Aorta (tissue), 5 donors: ENCODE measurements at regions of chr14 and their contacts with region 1.

Region 1: DNA sequence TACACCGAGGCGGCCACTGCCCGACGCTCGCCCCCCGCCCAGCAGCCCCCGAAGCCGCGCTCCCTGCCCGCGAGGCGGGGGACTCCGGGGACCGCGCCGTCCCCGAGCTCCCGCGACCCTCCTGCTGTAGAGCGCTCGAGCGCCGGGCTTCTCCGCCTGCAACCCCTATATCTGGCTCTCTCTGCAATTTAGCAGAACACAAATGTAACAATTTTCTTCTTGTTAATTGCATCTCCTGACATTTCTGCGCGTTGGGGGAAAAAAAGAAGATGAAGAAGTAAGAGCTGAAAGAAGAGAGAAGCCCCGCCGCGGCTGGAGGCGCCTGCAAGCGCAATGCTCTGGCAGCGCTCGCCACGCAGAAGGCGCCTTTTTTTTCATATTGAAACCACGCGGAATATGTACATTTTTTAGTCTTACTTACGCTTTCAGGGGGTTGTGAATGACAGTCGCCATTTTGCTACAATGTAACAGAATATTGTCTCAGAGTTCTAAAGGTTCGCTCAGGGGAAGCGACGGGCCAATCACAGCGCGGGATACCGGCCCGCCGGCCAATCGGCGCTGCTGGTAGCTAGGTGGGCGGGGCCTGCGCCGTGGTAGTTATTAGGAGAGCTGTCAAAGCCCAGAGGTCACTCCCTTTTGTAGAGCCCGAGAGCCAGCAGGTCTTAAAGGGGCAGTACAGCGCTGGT is at the start of gene DPF3:
- DNase-seq: peak; percentile 97 to 99
- ATAC-seq: peak; percentile 99
- H3K4me3 ChIP-seq: peak within 1 kb of the TSS; percentile 30 to 92
- H3K27ac ChIP-seq: no peak within 1 kb of the TSS
- H3K4me1 ChIP-seq: no peaks in the 10 kb centered on the region
- H3K27me3 ChIP-seq: no peaks in the 10 kb centered on the region
- total RNA-seq, gene DPF3: 0.65 to 2.2 TPM

Region 2: DNA sequence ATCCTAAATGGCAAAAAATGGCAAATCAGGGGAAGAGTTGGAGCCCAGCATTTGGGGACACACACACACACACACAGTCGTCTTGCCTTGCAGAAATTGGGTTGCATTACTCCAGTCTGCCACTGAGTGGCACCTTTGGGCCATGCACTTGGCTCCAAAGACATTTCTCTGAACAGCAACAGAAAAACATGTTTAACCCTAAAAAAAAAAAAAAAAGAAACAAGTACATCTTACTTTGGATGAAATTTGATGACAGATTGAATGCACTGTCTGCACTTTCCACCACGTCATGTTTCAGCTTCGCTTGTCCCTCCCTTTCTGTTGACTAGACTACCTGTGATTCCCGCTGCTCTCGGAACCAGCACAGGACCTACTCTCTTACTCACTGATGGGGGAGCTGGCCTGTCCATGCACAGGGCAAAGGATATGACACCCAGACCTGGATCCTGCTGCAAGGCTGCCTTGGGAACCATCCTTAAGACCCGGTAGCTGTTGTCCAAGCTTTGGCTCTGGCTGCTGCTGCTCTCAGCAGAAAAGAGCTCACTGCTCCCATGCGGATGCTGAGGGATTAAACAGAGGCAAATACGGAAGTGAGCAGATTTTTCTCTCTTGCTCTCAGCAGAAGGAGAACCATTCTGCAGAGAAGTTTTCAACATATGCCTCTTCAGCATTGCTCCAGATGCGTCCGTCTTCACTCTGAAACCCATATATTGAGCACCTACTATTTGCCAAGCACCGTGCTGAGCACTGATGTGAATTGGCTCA is 376.7 kb before region 1 on chr14:
- intact Hi-C with region 1: no loop called
- DNase-seq: peak; percentile 71 to 85
- ATAC-seq: peak; percentile 87
- H3K4me3 ChIP-seq: no peak overlapping the region
- H3K27ac ChIP-seq: no peak overlapping the region
- H3K4me1 ChIP-seq: no peaks in the 10 kb centered on the region
- H3K27me3 ChIP-seq: no peaks in the 10 kb centered on the region

Region 3: GRCh38 chr14:72745991-72746980 is 147.5 kb before region 1 on chr14:
- intact Hi-C with region 1: loop called (anchors 5 to 10 kb)
- DNase-seq: no peak
- ATAC-seq: peak; percentile 21
- H3K4me3 ChIP-seq: no peak overlapping the region
- H3K27ac ChIP-seq: peak overlapping the region in 1 of 2 donors; percentile 81
- H3K4me1 ChIP-seq: peaks cover 0 to 2% of the 10 kb centered on the region in 2 donors
- H3K27me3 ChIP-seq: no peaks in the 10 kb centered on the region

Region 4: GRCh38 chr14:72812292-72812911 is 81.4 kb before region 1 on chr14:
- intact Hi-C with region 1: loop called (anchors 5 kb)
- DNase-seq: peak; percentile 83 to 87
- ATAC-seq: peak; percentile 85
- H3K4me3 ChIP-seq: no peak overlapping the region
- H3K27ac ChIP-seq: peak overlapping the region; percentile 20 to 93
- H3K4me1 ChIP-seq: no peaks in the 10 kb centered on the region
- H3K27me3 ChIP-seq: no peaks in the 10 kb centered on the region

Region 5: GRCh38 chr14:72942782-72943333 is 49.1 kb after region 1 on chr14:
- intact Hi-C with region 1: loop called in 1 of 2 experiments (anchors 5 kb)
- DNase-seq: peak in 1 of 2 donors; percentile 61
- ATAC-seq: no peak
- H3K4me3 ChIP-seq: no peak overlapping the region
- H3K27ac ChIP-seq: no peak overlapping the region
- H3K4me1 ChIP-seq: no peaks in the 10 kb centered on the region
- H3K27me3 ChIP-seq: no peaks in the 10 kb centered on the region

Region 6: GRCh38 chr14:72962829-72963312 is 69.1 kb after region 1 on chr14:
- intact Hi-C with region 1: no loop called
- DNase-seq: no peak
- ATAC-seq: no peak
- H3K4me3 ChIP-seq: no peak overlapping the region
- H3K27ac ChIP-seq: no peak overlapping the region
- H3K4me1 ChIP-seq: no peaks in the 10 kb centered on the region
- H3K27me3 ChIP-seq: no peaks in the 10 kb centered on the region